Mammary epithelial cell (primary cell): ENCODE measurements at regions of chr5 and their contacts with region 1.

Region 1: DNA sequence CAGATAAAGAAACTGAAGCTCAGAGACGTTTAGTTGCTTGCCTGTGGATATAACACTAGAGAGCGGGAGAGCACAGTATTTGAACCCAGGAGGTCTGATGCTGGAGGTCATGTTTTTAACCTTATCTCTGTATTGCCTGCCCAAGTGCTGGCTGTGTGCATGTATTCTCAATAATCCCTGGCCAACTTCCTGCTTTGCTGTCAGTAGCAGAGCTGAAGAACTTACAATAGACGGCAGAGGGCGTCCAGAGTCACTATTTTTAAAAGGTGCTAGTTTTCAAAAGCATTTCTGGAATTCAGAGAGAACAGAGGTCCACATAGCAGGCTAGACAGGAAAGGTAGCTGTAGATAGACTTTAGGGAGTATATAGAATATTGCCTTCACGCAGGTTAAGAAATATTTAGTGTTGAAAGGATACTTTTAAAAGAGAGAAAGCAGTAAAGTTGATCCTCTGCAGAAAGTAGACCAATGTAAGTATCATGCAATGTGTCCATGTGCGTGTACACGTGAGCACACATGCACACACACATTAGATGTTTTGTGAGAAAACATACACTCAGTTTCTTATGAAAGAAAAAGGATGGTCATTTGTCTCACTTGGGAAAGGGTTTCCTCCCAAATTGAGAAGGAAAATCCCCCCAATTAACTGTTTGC is 46.3 kb downstream of the PTCD2 start:
- DNase-seq: peak; percentile 61
- H3K4me3 ChIP-seq: no peak overlapping the region
- H3K27ac ChIP-seq: no peak overlapping the region
- H3K4me1 ChIP-seq: peaks cover 49% of the 10 kb centered on the region
- H3K27me3 ChIP-seq: no peaks in the 10 kb centered on the region
- CTCF ChIP-seq: peak; percentile 75 to 81

Region 2: GRCh38 chr5:72328172-72328571 is 38.3 kb before region 1 on chr5:
- CTCF ChIA-PET with region 1: no interaction called
- dilution Hi-C with region 1: no loop called
- in situ Hi-C with region 1: no loop called
- intact Hi-C with region 1: loop called (anchors 2 kb)
- DNase-seq: peak; percentile 55
- H3K4me3 ChIP-seq: no peak overlapping the region
- H3K27ac ChIP-seq: no peak overlapping the region
- H3K4me1 ChIP-seq: peaks cover 18% of the 10 kb centered on the region
- H3K27me3 ChIP-seq: no peaks in the 10 kb centered on the region
- CTCF ChIP-seq: no peak

Region 3: DNA sequence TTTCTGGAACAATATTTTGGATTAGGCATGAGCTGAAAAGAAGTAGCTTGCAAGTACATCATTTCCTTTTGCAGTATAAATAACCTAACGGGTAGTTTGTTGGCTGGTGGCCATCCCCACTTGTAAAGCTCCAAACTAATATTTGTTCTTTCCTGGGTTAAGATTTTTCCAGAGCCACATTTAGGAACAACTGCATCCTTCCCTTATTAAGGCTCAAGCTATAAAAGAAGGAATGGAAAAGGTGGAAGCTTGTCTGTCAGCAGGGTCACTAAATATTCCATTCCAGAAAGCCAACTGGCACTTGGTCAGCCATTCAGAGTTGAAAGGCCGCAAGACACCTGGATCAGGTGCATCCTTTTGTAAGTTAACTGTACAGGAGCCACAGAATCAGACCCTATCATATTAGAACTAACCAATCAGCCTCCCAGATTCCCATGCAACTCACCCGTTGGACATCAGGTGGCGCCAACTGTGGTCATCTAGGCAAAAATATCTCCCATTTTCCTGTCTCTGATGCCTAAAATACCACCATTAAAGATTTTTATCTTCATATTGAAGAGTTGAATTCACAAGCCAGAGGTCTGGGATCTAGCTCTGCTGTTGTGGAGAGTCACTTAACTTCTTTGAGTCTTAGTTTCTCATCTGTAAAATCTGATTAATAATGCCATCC is 36.6 kb after region 1 on chr5:
- CTCF ChIA-PET with region 1: no interaction called
- dilution Hi-C with region 1: no loop called
- in situ Hi-C with region 1: no loop called
- intact Hi-C with region 1: loop called (anchors 2 kb)
- DNase-seq: no peak
- H3K4me3 ChIP-seq: no peak overlapping the region
- H3K27ac ChIP-seq: peak overlapping the region; percentile 76
- H3K4me1 ChIP-seq: peaks cover 17% of the 10 kb centered on the region
- H3K27me3 ChIP-seq: no peaks in the 10 kb centered on the region
- CTCF ChIP-seq: peak; percentile 63 to 64

Region 4: GRCh38 chr5:72611118-72611730 is 244.8 kb after region 1 on chr5:
- CTCF ChIA-PET with region 1: interaction called, 5 read pairs
- dilution Hi-C with region 1: no loop called
- in situ Hi-C with region 1: no loop called
- intact Hi-C with region 1: loop called (anchors 2 kb)
- DNase-seq: peak; percentile 43
- H3K4me3 ChIP-seq: no peak overlapping the region
- H3K27ac ChIP-seq: no peak overlapping the region
- H3K4me1 ChIP-seq: peaks cover 5% of the 10 kb centered on the region
- H3K27me3 ChIP-seq: no peaks in the 10 kb centered on the region
- CTCF ChIP-seq: peak; percentile 94 to 99

Region 5: GRCh38 chr5:72744136-72744535 is 377.7 kb after region 1 on chr5:
- CTCF ChIA-PET with region 1: no interaction called
- dilution Hi-C with region 1: no loop called
- in situ Hi-C with region 1: no loop called
- intact Hi-C with region 1: no loop called
- DNase-seq: no peak
- H3K4me3 ChIP-seq: no peak overlapping the region
- H3K27ac ChIP-seq: no peak overlapping the region
- H3K4me1 ChIP-seq: no peaks in the 10 kb centered on the region
- H3K27me3 ChIP-seq: no peaks in the 10 kb centered on the region
- CTCF ChIP-seq: no peak

Region 6: GRCh38 chr5:72847989-72848473 is 481.6 kb after region 1 on chr5:
- CTCF ChIA-PET with region 1: no interaction called
- dilution Hi-C with region 1: no loop called
- in situ Hi-C with region 1: loop called in 1 of 2 experiments (anchors 10 kb)
- intact Hi-C with region 1: loop called (anchors 10 kb)
- DNase-seq: peak; percentile 90
- H3K4me3 ChIP-seq: peak overlapping the region; percentile 88 to 99 (median 94)
- H3K27ac ChIP-seq: peak overlapping the region; percentile 82
- H3K4me1 ChIP-seq: peaks cover 24% of the 10 kb centered on the region
- H3K27me3 ChIP-seq: no peaks in the 10 kb centered on the region
- CTCF ChIP-seq: no peak